ENCODE measurements at regions of chr7 and their contacts with region 1.

Region 1: GRCh38 chr7:40329601-40330153 is 194.9 kb downstream of the SUGCT start:
- DNase-seq: no peak

Region 2: DNA sequence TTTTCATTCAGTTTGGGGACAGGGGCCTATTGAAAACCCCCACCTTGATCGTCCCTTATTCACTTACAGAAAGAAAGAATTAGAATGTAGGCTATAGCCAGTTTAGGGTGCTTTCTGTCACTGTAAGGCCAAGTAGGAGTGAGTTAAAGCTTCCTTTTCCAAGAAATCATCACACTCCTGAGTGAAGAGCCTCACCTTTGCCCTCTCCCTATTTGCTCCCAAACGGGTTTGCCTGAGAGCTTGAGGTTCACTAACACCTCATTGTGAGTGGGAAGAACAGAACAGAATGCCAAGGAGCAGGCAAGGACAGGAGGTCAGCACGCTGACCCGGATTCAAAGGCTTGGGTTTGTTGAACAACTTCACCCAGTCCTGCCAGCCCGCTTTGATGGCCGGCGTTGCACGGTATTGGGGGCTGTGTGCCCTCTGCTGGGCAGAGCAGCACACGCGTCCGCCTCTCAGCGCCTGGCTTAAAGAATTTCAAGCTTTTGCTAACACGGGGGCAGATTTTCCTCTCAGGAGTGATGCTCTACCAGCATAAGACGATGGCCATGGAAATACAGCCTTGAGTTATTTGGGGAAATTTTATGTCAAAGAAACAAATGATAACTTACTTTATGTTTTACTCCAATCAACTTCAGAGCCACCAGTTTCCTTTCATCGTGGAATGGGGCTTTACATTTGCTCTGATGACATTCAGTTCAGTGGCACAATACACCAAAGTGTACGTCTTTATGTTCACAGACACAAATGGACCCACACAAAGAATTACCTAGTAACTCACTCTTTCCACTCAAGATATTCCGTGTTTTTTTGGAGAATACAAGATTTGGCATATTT is 275.1 kb after region 1 on chr7:
- intact Hi-C with region 1: loop called (anchors 2 kb)
- DNase-seq: peak; percentile 11 to 91 (median 48)

Region 3: DNA sequence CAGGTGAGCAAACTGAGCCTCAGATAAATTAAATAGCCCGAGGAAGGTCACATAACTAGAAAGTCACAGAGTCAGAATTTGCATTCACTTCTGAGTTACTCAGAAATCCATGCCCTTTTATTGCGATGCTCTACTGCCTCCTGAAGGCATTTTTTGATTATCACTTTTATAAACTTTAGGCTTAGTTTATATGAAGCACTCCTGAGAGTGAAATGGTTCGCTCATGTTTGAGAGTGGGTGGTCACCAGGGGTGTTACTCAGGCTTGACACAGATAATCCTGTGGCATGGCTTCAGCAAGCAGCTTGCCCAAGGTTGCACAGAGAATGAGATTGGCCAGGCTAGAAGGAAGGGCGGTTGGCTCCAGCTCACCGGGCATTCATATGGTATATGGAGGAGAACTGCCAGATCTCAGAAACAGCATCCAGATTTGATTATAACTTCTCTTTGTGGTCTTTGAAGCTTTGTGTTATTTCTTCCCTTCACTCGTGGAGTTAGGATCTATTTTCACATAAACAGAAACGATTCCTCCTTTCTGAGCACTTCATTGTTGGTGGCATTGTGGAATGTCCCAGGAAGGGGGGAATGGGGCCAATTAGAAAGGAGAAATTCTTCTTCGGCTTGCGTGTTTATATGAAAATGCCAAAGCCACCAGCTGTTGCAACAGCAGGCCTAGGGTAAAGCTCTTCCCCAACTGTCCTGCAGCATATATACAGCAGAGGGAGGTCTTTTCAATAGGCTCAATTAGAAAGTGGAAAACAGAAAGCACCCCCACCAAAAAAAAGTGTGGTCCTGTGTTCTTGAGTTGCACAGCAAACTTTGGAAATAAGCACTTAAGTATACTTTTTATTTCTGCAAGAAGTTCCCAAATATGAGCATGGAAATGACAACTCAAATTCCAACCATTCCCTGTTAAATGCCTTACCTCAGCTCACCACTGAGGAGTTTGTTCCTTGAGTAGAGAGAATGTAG is 433.9 kb after region 1 on chr7:
- intact Hi-C with region 1: loop called (anchors 2 kb)
- DNase-seq: no peak

Region 4: GRCh38 chr7:41705109-41705901 is 1375.6 kb after region 1 on chr7:
- intact Hi-C with region 1: loop called (anchors 10 kb)
- DNase-seq: peak; percentile 61 to 95 (median 78)

Region 5: GRCh38 chr7:41731492-41732435 is 1402.1 kb after region 1 on chr7:
- intact Hi-C with region 1: loop called (anchors 10 kb)
- DNase-seq: no peak